ENCODE measurements at regions of chr12 and their contacts with region 1.

Region 1: DNA sequence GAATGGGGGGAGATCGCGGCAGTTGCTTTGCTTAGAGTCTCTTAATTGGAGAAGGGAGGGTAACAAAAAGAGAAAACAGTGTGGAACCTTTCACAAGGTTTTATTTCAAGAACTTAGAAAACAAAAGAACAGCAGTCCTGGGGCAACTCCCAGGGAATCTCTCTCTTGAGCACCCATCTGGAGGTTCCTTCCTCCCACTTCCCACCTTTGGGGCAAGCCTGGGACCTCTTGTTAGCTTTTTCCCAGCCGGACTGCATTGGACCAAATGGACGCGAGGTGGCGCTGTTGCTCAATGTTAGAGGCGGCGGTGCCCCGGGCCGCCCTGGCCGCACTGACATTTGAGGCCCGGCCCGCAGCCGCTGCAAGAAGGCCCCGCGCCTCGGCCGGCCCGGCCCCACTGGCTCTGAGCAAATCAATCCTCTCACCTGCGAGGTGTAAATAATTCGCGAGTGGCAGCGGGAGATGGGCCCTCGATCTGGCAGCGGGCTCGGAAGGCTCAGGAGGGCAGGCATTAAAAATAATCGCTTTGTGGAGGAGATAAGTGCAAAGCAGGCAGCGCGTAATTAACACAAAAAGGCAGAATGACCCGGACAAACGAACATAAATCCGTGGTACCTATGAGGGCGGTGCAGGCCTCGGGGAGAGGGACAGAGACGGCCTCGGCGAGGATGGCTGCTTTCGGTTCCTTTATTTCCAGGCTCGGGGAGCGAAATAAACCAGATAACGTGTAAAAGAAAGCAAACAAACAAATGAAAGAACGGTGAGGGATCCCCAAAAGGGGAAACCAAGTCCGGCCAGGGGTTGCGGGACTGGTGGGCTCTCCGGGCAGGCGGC is 2.7 kb upstream of the HOXC8 start:
- DNase-seq: peak; percentile 93
- ATAC-seq: peak; percentile 94
- H3K4me3 ChIP-seq: peak overlapping the region; percentile 40
- H3K27ac ChIP-seq: no peak overlapping the region
- H3K4me1 ChIP-seq: peaks cover 13% of the 10 kb centered on the region
- H3K27me3 ChIP-seq: peaks cover 91% of the 10 kb centered on the region
- CTCF ChIP-seq: peak; percentile 92

Region 2: DNA sequence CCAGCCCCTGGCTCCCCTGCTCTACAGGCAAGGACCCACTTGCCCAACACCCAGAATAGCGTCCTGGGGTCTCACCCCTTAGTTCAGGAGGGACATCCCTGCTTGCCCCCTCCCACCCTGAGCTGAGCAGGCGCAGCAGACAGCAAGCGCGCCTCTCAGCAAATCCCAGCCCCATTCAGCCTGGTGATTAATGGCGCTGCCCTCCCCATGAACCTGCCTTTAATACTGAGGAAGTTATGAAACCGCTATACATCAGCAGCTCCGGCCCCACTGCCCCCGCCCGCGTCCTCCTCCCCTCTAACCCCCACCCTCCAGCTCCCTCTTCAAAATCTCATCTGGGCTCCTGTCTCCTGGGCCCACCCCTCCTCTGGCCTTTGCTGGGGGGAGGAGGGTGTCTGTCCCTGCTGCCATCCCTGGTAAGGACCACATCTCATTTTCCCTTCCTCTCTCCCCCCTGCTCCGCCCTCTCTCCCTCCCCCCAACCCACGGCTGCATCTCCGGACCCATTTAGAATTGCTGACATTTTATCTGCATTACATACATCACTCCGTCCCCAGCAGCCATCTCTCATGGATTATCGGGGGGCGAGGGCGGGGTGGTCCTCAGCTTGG is 189.8 kb after region 1 on chr12:
- intact Hi-C with region 1: loop called (anchors 5 kb)
- DNase-seq: no peak
- ATAC-seq: peak; percentile 70
- H3K4me3 ChIP-seq: no peak overlapping the region
- H3K27ac ChIP-seq: no peak overlapping the region
- H3K4me1 ChIP-seq: no peaks in the 10 kb centered on the region
- H3K27me3 ChIP-seq: peaks cover 65% of the 10 kb centered on the region
- CTCF ChIP-seq: no peak

Region 3: DNA sequence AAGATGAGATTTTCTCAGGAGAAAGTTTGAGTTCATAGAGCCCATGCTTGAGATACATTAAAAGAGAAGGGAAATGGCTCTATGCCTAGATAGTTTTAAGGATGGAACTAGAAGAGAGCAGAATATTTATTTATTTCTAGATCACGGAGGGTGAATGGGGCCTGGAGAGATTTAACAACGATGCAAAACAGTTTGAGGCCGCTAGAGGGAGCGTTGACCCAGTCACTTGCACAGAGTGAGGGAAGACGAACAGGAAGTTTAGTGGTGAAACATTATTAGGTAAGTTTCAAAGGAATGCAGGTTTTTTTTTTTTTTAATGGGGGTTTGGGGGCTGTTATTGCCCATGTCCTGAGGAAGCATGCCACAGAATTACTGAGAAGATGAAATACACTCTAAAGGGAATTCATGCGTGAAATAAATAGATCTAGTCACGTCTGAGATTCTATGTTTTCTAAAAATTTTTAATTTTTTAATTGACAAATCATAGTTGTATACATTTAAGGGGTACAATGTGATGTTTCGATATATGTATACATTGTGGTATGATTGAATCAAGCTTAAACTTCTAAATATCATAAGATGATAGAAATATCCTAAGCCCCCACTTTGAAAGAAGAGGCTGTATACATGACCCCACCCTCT is 597.2 kb after region 1 on chr12:
- intact Hi-C with region 1: no loop called
- DNase-seq: no peak
- ATAC-seq: peak; percentile 90
- H3K4me3 ChIP-seq: no peak overlapping the region
- H3K27ac ChIP-seq: no peak overlapping the region
- H3K4me1 ChIP-seq: no peaks in the 10 kb centered on the region
- H3K27me3 ChIP-seq: no peaks in the 10 kb centered on the region
- CTCF ChIP-seq: peak; percentile 73